Posterior vena cava (tissue), 2 donors: ENCODE measurements at regions of chr2 and their contacts with region 1.

Region 1: DNA sequence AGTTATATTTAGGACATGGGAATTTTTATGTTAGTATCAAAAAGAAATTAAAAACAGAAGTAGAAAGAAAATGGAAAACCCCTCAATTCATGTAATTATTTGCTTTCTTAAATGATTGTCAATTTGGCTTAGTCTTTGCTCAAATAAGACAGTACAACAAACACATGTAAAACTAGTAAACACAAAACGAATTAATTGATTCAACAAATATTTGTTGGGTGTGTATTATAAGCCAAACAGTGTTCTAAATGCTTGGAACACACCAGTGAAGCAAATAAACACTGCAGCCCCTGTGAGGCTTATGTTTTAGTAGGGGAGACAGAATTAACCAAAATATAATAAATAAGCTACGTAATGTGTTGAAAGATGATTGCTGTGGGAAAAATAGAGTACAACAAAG is 234.5 kb upstream of the STON1 start:
- DNase-seq: no peak

Region 2: DNA sequence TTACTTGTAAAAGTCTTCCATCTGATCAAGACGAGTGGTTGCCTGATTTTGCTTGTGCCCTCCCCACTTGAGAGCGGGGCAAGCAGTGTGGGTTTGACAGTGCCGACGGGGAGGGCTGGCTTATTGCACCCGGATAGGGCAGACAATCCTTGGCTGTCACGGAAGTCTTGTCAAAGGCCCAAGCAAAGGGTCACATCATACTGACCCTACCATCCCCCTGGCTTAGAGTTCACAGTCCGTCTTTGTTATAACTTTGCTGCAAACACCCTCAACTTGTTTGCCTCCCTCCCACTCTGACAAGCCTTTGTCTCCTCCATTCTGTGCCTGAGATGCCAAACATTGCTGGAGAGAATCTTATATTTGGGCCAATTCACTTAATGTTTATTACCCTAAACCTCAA is 678.4 kb before region 1 on chr2:
- intact Hi-C with region 1: loop called in 1 of 2 experiments (anchors 5 kb)
- DNase-seq: peak; percentile 43